Activated CD4-positive, alpha-beta T cell treated with anti-CD3 and anti-CD28 coated beads for 36 hours (primary cell): ENCODE measurements at regions of chr2 and their contacts with region 1.

Region 1: GRCh38 chr2:27954771-27955383 is 64.3 kb downstream of the BABAM2 start:
- DNase-seq: peak; percentile 71
- ATAC-seq: peak; percentile 72
- H3K4me3 Mint-ChIP-seq: peak overlapping the region; percentile 55
- H3K27ac Mint-ChIP-seq: peak overlapping the region; percentile 91
- H3K4me1 Mint-ChIP-seq: peaks cover 73% of the 10 kb centered on the region
- H3K27me3 Mint-ChIP-seq: no peaks in the 10 kb centered on the region

Region 2: DNA sequence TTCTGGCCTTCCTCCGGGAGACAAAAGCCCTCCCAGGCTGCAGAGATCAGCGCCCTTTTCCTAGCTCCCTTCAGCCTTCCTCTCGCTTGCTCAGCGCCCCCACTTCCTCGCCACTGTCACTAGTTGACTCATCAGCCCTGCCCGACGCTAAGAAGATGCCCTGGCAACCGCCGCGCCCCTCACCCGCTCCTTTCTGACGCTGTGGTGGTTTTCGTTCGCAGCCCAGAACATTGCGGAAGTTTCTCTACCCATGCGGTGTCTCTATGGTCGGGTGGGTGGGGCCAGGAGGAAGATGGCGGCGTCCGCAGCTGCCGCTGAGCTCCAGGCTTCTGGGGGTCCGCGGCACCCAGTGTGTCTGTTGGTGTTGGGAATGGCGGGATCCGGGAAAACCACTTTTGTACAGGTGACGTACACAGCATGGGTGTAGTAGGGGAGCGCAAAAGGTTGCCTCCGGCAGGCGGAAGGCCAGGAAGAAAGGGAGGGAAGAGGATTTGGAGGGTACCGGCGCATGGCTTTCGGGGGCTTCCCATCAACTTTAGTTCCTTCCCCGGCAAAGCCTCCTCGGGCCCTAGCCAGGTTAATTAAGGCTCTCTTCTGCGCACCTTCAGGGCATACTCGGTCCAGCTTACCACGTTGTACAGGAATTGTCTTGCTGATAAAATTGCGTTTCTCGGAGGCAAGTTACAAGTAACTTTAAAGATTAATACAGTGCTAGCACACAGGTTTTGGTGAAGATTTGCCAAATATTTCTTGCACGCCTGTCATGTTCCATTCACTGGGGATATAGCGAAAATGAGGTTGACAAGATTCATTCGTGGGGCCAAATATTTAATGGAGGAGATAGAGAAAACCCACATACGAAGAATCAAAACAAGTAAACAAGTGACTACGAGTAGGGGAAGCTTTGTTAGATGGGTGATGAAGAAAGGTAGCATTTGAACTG is 325.8 kb before region 1 on chr2 and contains the starts of genes CCDC121 and GPN1:
- CTCF ChIA-PET with region 1: no interaction called
- POLR2A ChIA-PET with region 1: no interaction called
- intact Hi-C with region 1: no loop called
- DNase-seq: peak; percentile 98
- ATAC-seq: peak; percentile 96
- H3K4me3 Mint-ChIP-seq: no peak within 1 kb of the TSS
- H3K27ac Mint-ChIP-seq: no peak within 1 kb of the TSS
- H3K4me1 Mint-ChIP-seq: peaks cover 37% of the 10 kb centered on the region
- H3K27me3 Mint-ChIP-seq: no peaks in the 10 kb centered on the region
- total RNA-seq, gene CCDC121: 0.11 to 0.44 TPM
- total RNA-seq, gene GPN1: 45.6 to 63.9 TPM

Region 3: DNA sequence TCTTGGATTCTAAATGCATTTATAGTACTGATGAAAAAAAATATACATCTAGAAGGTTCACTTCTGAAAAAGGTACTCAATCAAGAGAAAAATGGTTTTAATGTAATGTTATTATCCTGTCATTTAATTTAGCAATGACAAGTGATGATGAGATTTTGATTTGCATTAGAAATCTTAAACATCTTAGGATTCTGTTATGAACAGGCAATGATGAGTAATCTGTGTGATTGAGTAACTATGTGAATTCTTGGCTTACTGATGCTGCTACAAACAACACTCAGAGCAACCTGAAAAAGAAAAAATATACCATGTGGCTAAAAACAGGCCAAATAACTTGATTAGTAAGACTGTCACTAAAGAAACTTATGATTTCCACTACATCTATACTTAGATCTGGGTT is 94.8 kb before region 1 on chr2:
- CTCF ChIA-PET with region 1: no interaction called
- POLR2A ChIA-PET with region 1: no interaction called
- intact Hi-C with region 1: loop called in 1 of 2 experiments (anchors 2 kb)
- DNase-seq: no peak
- ATAC-seq: peak; percentile 76
- H3K4me3 Mint-ChIP-seq: no peak overlapping the region
- H3K27ac Mint-ChIP-seq: peak overlapping the region; percentile 13
- H3K4me1 Mint-ChIP-seq: peaks cover 42% of the 10 kb centered on the region
- H3K27me3 Mint-ChIP-seq: no peaks in the 10 kb centered on the region

Region 4: GRCh38 chr2:27902098-27902497 is 52.8 kb before region 1 on chr2:
- CTCF ChIA-PET with region 1: no interaction called
- POLR2A ChIA-PET with region 1: no interaction called
- intact Hi-C with region 1: loop called (anchors 1 kb)
- DNase-seq: no peak
- ATAC-seq: peak; percentile 86
- H3K4me3 Mint-ChIP-seq: no peak overlapping the region
- H3K27ac Mint-ChIP-seq: peak overlapping the region; percentile 79
- H3K4me1 Mint-ChIP-seq: peaks cover 79% of the 10 kb centered on the region
- H3K27me3 Mint-ChIP-seq: no peaks in the 10 kb centered on the region

Region 5: GRCh38 chr2:27920148-27920885 is 34.6 kb before region 1 on chr2:
- CTCF ChIA-PET with region 1: no interaction called
- POLR2A ChIA-PET with region 1: no interaction called
- intact Hi-C with region 1: no loop called
- DNase-seq: no peak
- ATAC-seq: peak; percentile 36
- H3K4me3 Mint-ChIP-seq: no peak overlapping the region
- H3K27ac Mint-ChIP-seq: peak overlapping the region; percentile 48
- H3K4me1 Mint-ChIP-seq: peaks cover 20% of the 10 kb centered on the region
- H3K27me3 Mint-ChIP-seq: no peaks in the 10 kb centered on the region

Region 6: GRCh38 chr2:27966483-27966882 is 11.6 kb after region 1 on chr2:
- CTCF ChIA-PET with region 1: interaction called, 4 read pairs
- POLR2A ChIA-PET with region 1: no interaction called
- intact Hi-C with region 1: loop called in 1 of 2 experiments (anchors 1 kb)
- DNase-seq: no peak
- ATAC-seq: no peak
- H3K4me3 Mint-ChIP-seq: no peak overlapping the region
- H3K27ac Mint-ChIP-seq: peak overlapping the region; percentile 17
- H3K4me1 Mint-ChIP-seq: peaks cover 55% of the 10 kb centered on the region
- H3K27me3 Mint-ChIP-seq: no peaks in the 10 kb centered on the region

Region 7: DNA sequence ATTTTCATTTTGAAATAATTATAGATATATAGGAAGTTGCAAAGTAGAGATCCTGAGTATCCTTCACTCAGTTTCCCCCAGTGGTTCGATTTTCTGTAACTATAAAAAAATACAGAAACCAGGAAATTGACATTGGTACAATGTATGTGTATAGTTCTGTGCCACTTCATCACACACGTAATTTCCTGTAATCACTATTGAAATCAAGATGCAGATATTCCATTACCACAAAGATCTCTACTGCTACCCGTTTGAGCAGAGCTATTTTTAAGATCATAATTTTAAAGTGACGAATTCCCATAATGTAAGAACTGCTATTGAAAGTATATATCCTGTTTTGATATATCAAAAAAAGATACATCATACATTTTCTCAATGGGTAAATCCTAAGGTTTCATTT is 77.9 kb after region 1 on chr2:
- CTCF ChIA-PET with region 1: no interaction called
- POLR2A ChIA-PET with region 1: no interaction called
- intact Hi-C with region 1: loop called in 1 of 2 experiments (anchors 2 kb)
- DNase-seq: no peak
- ATAC-seq: peak; percentile 92
- H3K4me3 Mint-ChIP-seq: no peak overlapping the region
- H3K27ac Mint-ChIP-seq: no peak overlapping the region
- H3K4me1 Mint-ChIP-seq: peaks cover 27% of the 10 kb centered on the region
- H3K27me3 Mint-ChIP-seq: no peaks in the 10 kb centered on the region